Colonic mucosa (tissue), 4 donors: ENCODE measurements at regions of chr2 and their contacts with region 1.

Region 1: DNA sequence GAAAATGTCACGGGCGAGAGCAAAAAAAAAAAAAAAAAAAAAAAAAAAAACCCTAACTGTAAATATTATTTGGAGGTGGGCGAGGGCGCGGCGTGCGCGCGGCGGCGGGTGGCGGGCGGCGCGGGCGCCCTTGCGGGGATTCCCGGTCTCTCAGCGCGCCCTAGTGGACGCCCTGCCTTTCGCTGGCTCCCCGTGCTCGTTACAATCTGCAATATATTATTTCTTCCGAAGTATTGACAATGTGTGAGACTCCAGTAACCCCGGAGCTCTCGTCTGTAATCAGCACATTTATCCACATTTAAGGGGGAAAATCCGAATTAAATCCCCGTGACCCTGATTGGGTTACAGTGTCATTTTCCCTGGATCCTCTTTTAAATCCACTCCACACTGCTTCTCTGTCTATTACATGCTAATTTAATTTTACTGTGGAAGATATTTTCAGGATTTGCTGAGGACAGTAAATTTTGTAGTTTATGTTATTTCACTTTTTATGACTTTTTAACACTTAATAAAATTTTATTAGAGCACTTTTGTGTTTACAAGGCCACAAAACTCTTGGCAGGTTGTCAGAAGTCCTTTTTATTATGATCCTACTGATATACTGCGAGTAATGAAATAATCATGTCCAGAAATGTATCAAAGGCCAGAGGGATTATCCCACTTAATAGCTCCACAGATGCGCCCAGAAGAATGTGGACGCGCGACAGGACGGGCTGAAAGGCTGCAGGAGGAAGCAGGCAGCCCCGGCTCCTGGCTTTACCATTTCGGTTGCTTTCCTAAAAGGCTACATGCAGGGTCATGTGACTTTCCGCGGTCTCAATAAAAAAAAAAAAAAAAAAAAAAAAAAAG is 369.1 kb downstream of the MTX2 start:
- DNase-seq: peak; percentile 71
- H3K4me3 ChIP-seq: peak overlapping the region; percentile 64
- H3K27ac ChIP-seq: peak overlapping the region; percentile 75
- H3K4me1 ChIP-seq: no peaks in the 10 kb centered on the region
- H3K27me3 ChIP-seq: peaks cover 9% of the 10 kb centered on the region
- CTCF ChIP-seq: peak; percentile 81

Region 2: DNA sequence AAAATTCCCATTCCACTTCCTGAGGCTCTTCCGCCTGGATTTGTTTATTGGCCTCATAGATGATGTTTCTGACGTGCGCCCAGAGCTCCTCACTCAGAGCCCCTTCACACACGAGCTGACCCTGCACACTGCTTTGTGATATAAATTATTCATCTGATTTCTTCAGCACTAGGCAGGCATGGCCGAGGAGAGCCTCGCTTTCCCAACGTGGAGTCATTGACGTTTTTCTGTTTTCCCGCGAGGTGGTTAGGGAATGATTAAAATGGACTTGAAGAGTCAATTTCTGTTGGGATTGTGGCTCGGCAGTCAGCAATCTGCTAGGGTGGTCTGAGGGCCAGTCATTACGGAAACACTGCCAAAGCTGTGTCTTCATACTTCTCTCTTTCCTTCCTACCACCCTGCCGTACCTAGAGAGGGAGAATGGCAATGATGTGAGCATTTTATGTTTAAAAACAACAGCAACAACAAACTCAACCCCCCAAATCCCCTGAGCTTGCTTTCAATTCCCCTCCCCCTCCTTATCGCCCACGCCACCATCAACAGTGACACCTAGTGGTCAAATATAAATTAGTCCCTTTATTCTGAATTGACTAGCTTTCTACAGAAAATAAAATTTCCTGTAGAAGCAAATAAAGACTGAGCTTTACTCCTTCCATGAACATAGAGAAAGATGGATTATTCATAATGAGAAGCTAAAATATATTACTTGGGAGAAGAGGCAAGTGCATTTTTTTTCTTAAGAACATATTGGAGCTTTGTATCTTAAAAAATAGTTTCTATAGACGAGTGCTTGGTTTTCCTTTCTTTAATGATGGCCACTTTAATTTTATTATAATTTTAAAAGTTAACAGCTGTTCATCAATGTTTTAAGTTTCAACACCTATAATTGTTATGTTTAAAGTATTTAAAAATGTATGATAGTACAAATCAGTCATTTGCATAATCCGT is 84.0 kb before region 1 on chr2:
- intact Hi-C with region 1: loop called (anchors 5 kb)
- DNase-seq: peak; percentile 37
- H3K4me3 ChIP-seq: peak overlapping the region; percentile 21
- H3K27ac ChIP-seq: peak overlapping the region; percentile 35
- H3K4me1 ChIP-seq: no peaks in the 10 kb centered on the region
- H3K27me3 ChIP-seq: no peaks in the 10 kb centered on the region
- CTCF ChIP-seq: peak; percentile 72